Left colon (tissue), 2 donors: ENCODE measurements at regions of chr10 and their contacts with region 1.

Region 1: DNA sequence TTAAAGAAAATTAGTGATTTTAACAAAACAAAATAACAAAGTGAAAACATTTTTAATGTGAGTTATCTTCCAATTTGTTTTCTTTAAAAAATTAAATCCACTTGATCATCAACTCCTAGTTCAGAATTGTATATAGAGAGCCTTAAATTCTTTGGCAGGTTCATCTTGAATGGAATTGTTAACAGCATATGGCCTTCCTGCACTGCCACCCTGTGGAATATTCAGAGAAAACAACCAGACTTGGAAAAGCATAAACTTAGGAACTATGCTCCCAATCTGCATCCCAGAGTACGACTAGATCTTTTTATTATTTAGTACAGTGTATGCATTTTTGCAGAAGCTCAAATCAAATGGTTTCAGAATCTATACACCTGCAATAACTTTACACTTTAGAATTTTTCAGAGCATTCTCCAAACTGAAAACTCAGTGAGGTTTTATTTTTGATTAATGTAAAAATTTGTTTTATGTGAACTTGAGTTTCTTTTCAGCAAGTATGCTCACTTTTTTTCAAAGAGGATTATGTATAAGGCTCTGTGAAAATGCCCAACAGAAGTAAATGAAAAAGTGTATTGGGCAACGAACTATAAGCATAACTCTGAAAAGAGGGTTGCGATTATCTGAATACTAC is 44.9 kb upstream of the ANK3 start:
- DNase-seq: peak in 1 of 2 donors; percentile 16
- ATAC-seq: peak; percentile 87

Region 2: DNA sequence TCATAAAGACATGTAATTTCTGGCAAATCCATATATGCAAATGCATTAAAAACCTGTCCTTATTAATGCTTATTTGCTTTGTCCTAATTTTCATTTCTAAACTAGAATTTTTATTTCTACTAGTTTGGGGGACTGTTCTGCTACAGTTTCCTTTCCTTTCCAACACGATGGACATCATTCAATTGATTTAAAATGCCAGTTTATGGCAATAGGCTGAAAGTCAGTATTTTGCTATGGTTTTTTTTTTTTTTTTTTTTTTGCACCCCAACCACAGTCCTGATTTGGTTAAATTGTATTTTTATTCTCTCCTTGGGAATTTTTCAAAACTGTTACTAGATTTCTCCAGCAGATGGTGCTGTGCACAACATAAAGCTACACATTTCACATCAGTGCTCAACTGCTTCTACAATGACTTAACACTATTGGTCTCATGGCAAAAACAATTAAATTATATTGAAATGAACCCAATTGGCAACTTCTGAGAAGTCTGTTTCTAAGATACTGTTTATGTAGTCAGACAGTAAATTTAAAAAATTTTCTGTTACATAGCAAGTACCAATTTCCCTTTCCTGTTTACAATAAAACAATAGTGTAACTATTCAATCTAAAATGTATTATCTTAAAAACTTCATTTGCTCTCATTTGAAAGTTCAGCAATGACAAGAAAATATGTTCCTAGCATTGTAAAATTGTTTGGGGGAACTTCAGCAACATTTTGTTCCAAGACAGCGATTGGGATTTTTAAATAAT is 334.4 kb before region 1 on chr10:
- intact Hi-C with region 1: loop called in 1 of 2 experiments (anchors 5 kb)
- DNase-seq: no peak
- ATAC-seq: peak; percentile 72

Region 3: DNA sequence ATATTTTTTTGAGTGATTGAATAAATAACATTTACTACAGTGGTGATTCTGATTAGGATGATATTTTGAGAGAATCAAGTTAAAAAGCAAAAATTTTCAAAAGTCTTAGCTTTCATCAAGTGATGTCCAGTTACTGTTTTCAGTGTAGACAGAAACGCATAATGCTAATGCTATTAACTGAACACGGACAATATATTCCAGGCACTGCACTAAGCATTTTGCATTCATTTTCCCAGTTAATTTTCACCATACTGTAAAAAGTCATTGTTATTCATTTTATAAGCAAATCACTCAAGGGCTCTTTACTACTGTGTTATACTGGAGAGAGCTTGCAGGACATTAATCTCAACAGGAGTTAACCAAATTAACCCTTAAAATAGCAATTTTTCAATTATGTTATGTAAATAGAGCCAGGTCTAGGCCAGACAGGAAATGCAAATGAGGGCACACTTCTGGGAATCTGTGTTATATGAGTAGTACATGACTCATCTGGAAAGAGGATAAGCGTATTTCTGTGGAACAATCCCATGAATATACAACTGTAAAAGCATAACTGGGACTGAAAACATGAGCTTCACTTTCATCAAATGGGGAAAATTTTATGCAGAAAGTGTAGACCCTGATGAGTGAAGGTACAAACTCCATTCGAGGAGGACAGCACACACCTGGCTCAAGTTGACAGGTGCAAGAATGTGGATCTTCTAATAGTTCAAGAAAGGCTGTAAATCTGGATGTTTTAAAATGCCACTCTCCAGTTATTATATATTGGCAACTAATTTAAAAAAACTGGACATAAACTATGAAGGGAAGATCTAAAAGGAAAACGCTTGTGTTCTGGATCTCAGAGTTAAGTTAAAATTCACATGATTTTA is 120.2 kb before region 1 on chr10:
- intact Hi-C with region 1: no loop called
- DNase-seq: no peak
- ATAC-seq: peak; percentile 58

Region 4: GRCh38 chr10:60549686-60550085 is 115.2 kb after region 1 on chr10:
- intact Hi-C with region 1: no loop called
- DNase-seq: no peak
- ATAC-seq: peak; percentile 89